Activated CD4-positive, alpha-beta T cell treated with anti-CD3 and anti-CD28 coated beads for 36 hours (primary cell): ENCODE measurements at regions of chr3 and their contacts with region 1.

Region 1: DNA sequence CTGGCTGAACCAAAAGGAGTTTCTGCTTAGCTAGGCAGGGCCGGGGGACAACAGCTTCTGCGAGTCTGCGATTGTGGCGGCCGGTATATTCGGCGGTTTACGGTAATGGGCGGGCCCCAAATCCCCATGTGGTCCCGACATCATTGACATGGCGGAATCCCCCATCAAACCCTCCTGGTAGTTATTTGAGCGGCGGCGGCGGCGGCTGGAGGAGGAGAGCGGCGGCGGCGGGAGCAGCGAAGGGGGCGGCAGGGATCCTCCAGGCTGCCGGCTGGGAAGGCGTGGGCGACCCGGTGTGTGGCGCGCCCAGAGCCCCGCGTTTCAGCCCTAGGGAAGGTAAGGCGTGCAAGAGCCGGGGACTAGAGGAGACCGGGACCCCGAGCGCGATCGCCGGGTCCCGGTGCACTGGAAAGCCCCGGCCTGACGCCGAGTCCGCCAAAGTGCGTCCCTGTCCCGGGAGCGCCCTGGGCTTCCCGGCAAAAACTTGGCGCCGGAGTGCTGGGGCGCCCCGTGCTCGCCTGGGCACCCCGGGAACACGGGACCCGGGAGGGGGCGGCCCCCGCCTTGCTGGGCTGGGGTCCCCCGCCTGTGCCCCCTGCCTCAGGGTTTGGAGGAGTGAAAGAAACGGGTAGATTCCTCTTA is at the start of gene FNDC3B:
- DNase-seq: peak; percentile 95
- ATAC-seq: peak; percentile 93
- H3K4me3 Mint-ChIP-seq: peak within 1 kb of the TSS; percentile 86
- H3K27ac Mint-ChIP-seq: peak within 1 kb of the TSS; percentile 88
- H3K4me1 Mint-ChIP-seq: peaks cover 24% of the 10 kb centered on the region
- H3K27me3 Mint-ChIP-seq: peaks cover 2% of the 10 kb centered on the region
- total RNA-seq, gene FNDC3B: 10.5 to 14.2 TPM

Region 2: GRCh38 chr3:171935261-171935974 is 104.1 kb before region 1 on chr3:
- CTCF ChIA-PET with region 1: no interaction called
- POLR2A ChIA-PET with region 1: interaction called, 3 read pairs
- intact Hi-C with region 1: loop called in 1 of 2 experiments (anchors 1 kb)
- DNase-seq: no peak
- ATAC-seq: no peak
- H3K4me3 Mint-ChIP-seq: no peak overlapping the region
- H3K27ac Mint-ChIP-seq: no peak overlapping the region
- H3K4me1 Mint-ChIP-seq: no peaks in the 10 kb centered on the region
- H3K27me3 Mint-ChIP-seq: peaks cover 4% of the 10 kb centered on the region

Region 3: DNA sequence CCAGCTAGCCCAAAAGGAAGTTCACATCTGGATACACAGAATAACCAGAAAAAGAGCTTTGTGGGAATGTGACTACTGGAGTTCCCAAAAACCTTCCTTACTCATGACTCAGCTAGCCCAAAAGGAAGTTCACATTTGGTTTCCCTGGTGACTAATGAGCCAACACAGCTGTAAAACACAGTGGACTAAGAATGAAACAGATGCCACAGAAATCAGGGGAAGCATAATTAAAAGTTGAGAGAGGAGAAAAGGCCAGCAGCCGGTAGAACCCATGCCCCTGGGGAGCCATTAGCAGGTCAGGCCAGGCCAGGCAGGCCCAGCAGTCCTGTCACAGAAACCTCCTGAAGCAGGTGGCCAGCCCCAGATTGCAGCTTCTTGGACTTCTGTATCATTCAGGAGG is 278.4 kb after region 1 on chr3:
- CTCF ChIA-PET with region 1: interaction called, 3 read pairs
- POLR2A ChIA-PET with region 1: interaction called, 5 read pairs
- intact Hi-C with region 1: loop called in 1 of 2 experiments (anchors 5 kb)
- DNase-seq: no peak
- ATAC-seq: peak; percentile 42
- H3K4me3 Mint-ChIP-seq: no peak overlapping the region
- H3K27ac Mint-ChIP-seq: no peak overlapping the region
- H3K4me1 Mint-ChIP-seq: peaks cover 13% of the 10 kb centered on the region
- H3K27me3 Mint-ChIP-seq: no peaks in the 10 kb centered on the region